ENCODE measurements at regions of chr6 and their contacts with region 1.

Region 1: GRCh38 chr6:65059568-65059967 is 647.5 kb downstream of the EYS start:
- DNase-seq: no peak
- ATAC-seq: no peak

Region 2: DNA sequence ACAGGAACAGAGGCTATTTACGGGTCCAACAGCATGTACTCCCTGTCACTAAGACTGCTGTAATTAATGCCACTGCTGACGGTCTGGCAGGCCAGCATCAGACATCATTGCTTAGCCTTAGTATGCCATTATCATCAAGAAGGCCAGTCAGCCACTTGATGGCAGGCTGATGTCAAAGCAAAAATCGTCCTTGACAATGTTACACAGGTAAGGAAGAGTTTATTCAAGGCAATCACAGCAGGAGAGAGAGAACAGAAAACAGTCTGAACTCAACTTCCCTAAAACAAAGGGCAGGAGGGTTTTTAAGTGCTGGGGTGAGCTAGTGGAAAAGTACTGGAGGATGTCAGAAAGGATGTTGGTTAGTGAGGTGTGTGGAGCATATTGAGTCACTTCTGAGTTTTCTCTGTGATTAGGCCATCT is 1823.2 kb before region 1 on chr6:
- intact Hi-C with region 1: no loop called
- DNase-seq: no peak
- ATAC-seq: no peak

Region 3: GRCh38 chr6:64861039-64861651 is 198.4 kb before region 1 on chr6:
- intact Hi-C with region 1: no loop called
- DNase-seq: no peak
- ATAC-seq: peak; percentile 46

Region 4: GRCh38 chr6:65091561-65091960 is 32.0 kb after region 1 on chr6:
- intact Hi-C with region 1: no loop called
- DNase-seq: no peak
- ATAC-seq: no peak

Region 5: DNA sequence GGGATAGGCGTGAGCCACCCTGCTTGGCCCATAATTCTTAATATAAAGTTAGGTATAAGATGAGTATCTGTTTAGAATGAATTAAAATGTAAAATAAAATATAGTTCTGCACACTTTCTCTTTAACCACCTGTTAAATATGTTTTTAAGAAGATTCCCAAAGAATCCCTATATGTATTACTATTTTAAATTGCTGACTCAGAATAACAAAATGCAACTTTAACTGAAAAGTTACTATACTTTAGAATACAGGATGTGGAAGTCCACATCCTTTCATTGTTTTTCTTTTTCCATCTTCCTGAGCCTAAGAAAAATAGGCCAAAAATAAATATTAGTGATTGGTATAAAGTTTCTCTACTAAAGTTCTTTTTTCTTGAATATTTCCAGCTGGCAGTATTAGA is 973.1 kb after region 1 on chr6:
- intact Hi-C with region 1: loop called (anchors 5 kb)
- DNase-seq: no peak
- ATAC-seq: no peak